Activated CD4-positive, alpha-beta T cell treated with anti-CD3 and anti-CD28 coated beads, Interleukin-2, amount 10 ng/mL, durations not matched to agents 7 days and 5 days (primary cell): ENCODE measurements at regions of chr3 and their contacts with region 1.

Region 1: DNA sequence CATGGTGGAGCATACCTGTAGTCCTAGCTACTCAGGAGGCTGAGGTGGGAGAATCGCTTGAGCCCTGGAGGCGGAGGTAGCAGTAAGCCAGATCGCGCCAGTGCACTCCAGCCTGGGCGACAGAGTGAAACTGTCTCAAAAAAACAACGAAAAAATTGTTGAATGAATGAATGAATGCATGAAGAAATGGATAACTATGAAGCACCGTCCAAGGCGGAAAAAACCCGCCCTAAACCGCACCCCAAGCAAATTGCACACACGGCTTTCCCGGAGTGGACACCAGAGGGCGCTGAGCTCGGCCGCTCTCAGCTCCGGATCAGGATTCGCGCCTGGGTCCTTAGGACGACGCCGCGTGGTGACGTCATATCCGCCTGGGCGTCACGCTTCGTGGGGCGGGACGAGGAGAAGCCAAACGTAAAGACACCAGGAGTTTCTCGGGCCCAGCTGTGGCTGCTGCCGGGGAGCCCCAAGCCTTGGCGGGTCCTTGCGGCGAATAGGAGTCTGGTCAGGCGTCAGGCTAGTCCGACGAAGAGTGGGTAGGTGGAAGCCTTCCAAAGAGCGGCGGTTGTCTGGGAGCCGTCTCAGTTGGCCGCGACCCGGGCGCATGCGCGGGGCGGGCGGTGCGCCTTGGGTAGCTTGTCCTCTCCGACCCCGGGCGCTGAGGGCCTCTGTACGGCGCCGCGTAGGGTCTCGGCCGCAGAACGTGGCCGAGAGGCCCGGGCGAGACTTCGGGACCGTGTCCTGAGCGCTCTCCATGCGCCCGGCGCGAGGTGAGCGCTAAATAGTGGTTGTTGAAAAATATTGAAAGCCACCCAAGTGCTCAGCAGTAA is at the starts of genes HTD2 and RPP14:
- DNase-seq: peak; percentile 99
- H3K4me3 Mint-ChIP-seq: peak within 1 kb of the TSS; percentile 93
- H3K27ac Mint-ChIP-seq: peak within 1 kb of the TSS; percentile 99
- H3K4me1 Mint-ChIP-seq: peaks cover 35% of the 10 kb centered on the region
- H3K27me3 Mint-ChIP-seq: peaks cover 15% of the 10 kb centered on the region
- total RNA-seq, gene HTD2: 6.2 to 7.0 TPM
- total RNA-seq, gene RPP14: 12.7 to 15.4 TPM

Region 2: DNA sequence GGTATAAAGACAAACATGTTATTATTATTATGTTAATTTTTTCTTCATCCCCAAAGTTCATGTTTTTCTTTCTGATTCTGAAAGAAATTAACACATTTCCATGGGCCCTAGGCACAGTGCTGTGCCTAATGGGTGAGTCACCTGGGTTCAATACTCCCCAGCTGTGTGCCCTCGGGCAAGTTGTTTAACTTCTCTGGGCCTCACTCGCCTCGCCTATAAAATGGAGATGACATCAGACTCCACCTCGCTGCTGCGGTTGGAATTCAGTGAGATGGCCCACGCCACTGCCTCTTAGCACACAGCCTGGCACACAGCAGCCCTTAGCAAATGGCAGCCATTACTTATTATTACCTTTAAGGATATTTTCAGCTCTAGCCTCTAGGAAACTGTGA is 117.9 kb before region 1 on chr3:
- CTCF ChIA-PET with region 1: interaction called, 26 read pairs
- POLR2A ChIA-PET with region 1: no interaction called
- DNase-seq: no peak
- H3K4me3 Mint-ChIP-seq: no peak overlapping the region
- H3K27ac Mint-ChIP-seq: no peak overlapping the region
- H3K4me1 Mint-ChIP-seq: peaks cover 1% of the 10 kb centered on the region
- H3K27me3 Mint-ChIP-seq: no peaks in the 10 kb centered on the region

Region 3: GRCh38 chr3:58293516-58293915 is 12.6 kb before region 1 on chr3:
- CTCF ChIA-PET with region 1: interaction called, 25 read pairs
- POLR2A ChIA-PET with region 1: no interaction called
- DNase-seq: no peak
- H3K4me3 Mint-ChIP-seq: no peak overlapping the region
- H3K27ac Mint-ChIP-seq: no peak overlapping the region
- H3K4me1 Mint-ChIP-seq: no peaks in the 10 kb centered on the region
- H3K27me3 Mint-ChIP-seq: peaks cover 3% of the 10 kb centered on the region

Region 4: GRCh38 chr3:58323529-58324390 is 17.7 kb after region 1 on chr3:
- CTCF ChIA-PET with region 1: interaction called, 23 read pairs
- POLR2A ChIA-PET with region 1: no interaction called
- DNase-seq: no peak
- H3K4me3 Mint-ChIP-seq: no peak overlapping the region
- H3K27ac Mint-ChIP-seq: peak overlapping the region; percentile 69
- H3K4me1 Mint-ChIP-seq: peaks cover 27% of the 10 kb centered on the region
- H3K27me3 Mint-ChIP-seq: no peaks in the 10 kb centered on the region

Region 5: DNA sequence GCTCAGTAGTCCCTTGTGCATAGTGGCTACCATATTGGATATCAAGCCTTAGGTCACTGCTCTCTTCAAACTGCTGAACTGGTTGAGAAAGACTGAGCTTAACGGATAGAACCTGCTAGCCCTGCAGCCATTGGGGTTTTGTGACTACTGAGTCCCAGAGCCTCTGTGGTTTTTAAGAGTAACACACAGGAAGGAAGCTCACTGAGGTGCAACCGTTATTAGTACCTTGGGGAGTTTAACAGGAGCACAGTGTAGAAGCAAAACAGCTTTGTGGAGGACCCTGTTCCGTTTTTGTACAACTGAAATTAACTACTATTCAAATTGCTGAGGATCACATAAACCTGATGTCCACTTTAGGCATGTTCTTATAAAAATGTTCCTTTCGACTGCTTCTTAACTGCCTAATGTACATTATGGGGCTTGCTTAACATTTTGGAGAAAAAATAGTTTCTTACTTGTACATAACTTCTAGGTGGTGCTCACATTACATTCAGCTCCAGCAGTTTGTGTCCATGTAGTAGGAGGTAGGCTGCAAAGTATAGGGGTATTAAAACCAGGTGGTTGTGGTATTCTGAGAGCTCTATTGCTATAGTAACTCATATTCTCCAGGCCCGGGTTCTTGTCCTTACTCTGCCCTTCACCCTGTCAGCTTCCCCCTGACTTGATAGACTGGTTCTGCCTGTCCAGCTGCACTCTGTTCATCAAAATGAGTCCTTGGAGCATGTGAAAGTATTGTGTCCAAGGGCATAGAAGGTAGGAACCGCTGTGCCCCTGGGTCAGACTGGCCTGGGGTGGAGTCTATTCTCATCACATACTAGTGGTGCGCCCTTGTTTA is 43.9 kb after region 1 on chr3:
- CTCF ChIA-PET with region 1: interaction called, 11 read pairs
- POLR2A ChIA-PET with region 1: no interaction called
- DNase-seq: peak; percentile 16
- H3K4me3 Mint-ChIP-seq: peak overlapping the region; percentile 21
- H3K27ac Mint-ChIP-seq: peak overlapping the region; percentile 73
- H3K4me1 Mint-ChIP-seq: peaks cover 80% of the 10 kb centered on the region
- H3K27me3 Mint-ChIP-seq: no peaks in the 10 kb centered on the region

Region 6: GRCh38 chr3:58491506-58492402 is 185.7 kb after region 1 on chr3 and contains the start of gene KCTD6:
- CTCF ChIA-PET with region 1: interaction called, 16 read pairs
- POLR2A ChIA-PET with region 1: no interaction called
- DNase-seq: peak; percentile 81
- H3K4me3 Mint-ChIP-seq: peak within 1 kb of the TSS; percentile 84
- H3K27ac Mint-ChIP-seq: peak within 1 kb of the TSS; percentile 86
- H3K4me1 Mint-ChIP-seq: peaks cover 41% of the 10 kb centered on the region
- H3K27me3 Mint-ChIP-seq: peaks cover 39% of the 10 kb centered on the region
- total RNA-seq, gene KCTD6: 7.7 to 10.8 TPM

Region 7: DNA sequence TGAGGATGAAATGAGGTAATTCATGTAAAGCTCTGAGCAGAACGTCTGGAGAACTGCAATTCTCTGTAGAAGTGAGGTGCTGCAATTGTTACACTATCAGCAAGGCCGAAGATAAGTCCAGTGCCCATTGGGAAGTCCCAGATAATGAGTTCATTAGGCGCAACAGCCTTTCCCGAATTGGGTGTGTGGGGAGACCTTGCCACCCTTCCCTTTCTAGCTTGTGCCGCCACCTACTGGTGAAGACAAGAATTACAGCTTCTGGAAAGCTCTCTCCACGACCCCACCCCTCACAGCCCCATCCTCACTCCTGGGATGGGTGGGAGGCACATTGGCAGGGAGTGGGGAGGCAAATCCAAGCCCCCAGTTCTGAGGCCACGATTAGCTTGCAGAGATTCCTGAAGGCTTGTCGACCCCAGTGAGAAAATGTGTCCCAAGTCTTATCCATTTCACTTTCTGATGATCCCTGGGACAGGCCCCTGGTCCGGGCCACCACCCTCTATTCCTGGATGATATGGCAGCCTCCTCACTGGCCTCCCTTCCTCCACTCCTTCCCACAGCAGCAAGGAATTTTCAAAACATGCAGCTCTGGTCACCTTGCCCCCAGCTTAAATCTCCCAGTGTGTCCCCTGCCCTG is 324.1 kb after region 1 on chr3:
- CTCF ChIA-PET with region 1: interaction called, 14 read pairs
- POLR2A ChIA-PET with region 1: no interaction called
- DNase-seq: peak; percentile 71
- H3K4me3 Mint-ChIP-seq: no peak overlapping the region
- H3K27ac Mint-ChIP-seq: no peak overlapping the region
- H3K4me1 Mint-ChIP-seq: peaks cover 4% of the 10 kb centered on the region
- H3K27me3 Mint-ChIP-seq: no peaks in the 10 kb centered on the region